Activated CD8-positive, alpha-beta T cell treated with anti-CD3 and anti-CD28 coated beads, Interleukin-2, amount 10 ng/mL, durations not matched to agents 7 days and 5 days (primary cell): ENCODE measurements at regions of chr1 and their contacts with region 1.

Region 1: GRCh38 chr1:203603940-203604591 is 22.6 kb upstream of the ATP2B4 start:
- DNase-seq: no peak
- ATAC-seq: no peak
- H3K4me3 Mint-ChIP-seq: no peak overlapping the region
- H3K27ac Mint-ChIP-seq: no peak overlapping the region
- H3K4me1 Mint-ChIP-seq: peaks cover 52% of the 10 kb centered on the region
- H3K27me3 Mint-ChIP-seq: no peaks in the 10 kb centered on the region

Region 2: DNA sequence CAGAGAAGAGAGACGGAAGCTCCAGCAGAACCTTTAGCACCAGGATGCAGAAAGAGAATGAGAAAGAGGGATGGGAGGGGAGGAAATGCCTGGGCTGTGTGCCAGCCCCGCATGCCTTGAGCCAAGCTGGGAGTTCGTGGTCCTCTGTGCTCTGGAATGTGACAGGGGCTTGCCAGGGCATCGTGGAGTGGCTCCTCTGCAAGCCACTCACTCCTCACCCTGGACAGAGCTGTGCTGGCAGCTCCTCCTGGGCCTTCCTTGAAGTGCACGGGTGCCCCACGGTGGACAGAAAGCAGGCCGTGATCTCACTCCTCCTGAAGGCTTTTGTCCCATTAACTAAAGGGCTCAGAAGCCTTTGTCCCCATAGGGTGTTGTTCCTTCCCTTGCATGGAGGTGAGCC is 163.3 kb before region 1 on chr1:
- CTCF ChIA-PET with region 1: no interaction called
- POLR2A ChIA-PET with region 1: no interaction called
- DNase-seq: no peak
- ATAC-seq: no peak
- H3K4me3 Mint-ChIP-seq: no peak overlapping the region
- H3K27ac Mint-ChIP-seq: no peak overlapping the region
- H3K4me1 Mint-ChIP-seq: no peaks in the 10 kb centered on the region
- H3K27me3 Mint-ChIP-seq: peaks cover 22% of the 10 kb centered on the region

Region 3: GRCh38 chr1:203581841-203582240 is 22.2 kb before region 1 on chr1:
- CTCF ChIA-PET with region 1: no interaction called
- POLR2A ChIA-PET with region 1: no interaction called
- DNase-seq: no peak
- ATAC-seq: no peak
- H3K4me3 Mint-ChIP-seq: no peak overlapping the region
- H3K27ac Mint-ChIP-seq: no peak overlapping the region
- H3K4me1 Mint-ChIP-seq: no peaks in the 10 kb centered on the region
- H3K27me3 Mint-ChIP-seq: peaks cover 19% of the 10 kb centered on the region

Region 4: GRCh38 chr1:203593723-203594122 is 10.3 kb before region 1 on chr1:
- CTCF ChIA-PET with region 1: interaction called, 15 read pairs
- POLR2A ChIA-PET with region 1: interaction called, 4 read pairs
- DNase-seq: peak; percentile 70
- ATAC-seq: peak; percentile 88
- H3K4me3 Mint-ChIP-seq: no peak overlapping the region
- H3K27ac Mint-ChIP-seq: peak overlapping the region; percentile 51
- H3K4me1 Mint-ChIP-seq: peaks cover 31% of the 10 kb centered on the region
- H3K27me3 Mint-ChIP-seq: peaks cover 7% of the 10 kb centered on the region

Region 5: GRCh38 chr1:203807196-203807595 is 203.1 kb after region 1 on chr1:
- CTCF ChIA-PET with region 1: no interaction called
- POLR2A ChIA-PET with region 1: no interaction called
- DNase-seq: no peak
- ATAC-seq: no peak
- H3K4me3 Mint-ChIP-seq: no peak overlapping the region
- H3K27ac Mint-ChIP-seq: no peak overlapping the region
- H3K4me1 Mint-ChIP-seq: peaks cover 20% of the 10 kb centered on the region
- H3K27me3 Mint-ChIP-seq: no peaks in the 10 kb centered on the region